T-cell (primary cell): ENCODE measurements at regions of chr2 and their contacts with region 1.

Region 1: DNA sequence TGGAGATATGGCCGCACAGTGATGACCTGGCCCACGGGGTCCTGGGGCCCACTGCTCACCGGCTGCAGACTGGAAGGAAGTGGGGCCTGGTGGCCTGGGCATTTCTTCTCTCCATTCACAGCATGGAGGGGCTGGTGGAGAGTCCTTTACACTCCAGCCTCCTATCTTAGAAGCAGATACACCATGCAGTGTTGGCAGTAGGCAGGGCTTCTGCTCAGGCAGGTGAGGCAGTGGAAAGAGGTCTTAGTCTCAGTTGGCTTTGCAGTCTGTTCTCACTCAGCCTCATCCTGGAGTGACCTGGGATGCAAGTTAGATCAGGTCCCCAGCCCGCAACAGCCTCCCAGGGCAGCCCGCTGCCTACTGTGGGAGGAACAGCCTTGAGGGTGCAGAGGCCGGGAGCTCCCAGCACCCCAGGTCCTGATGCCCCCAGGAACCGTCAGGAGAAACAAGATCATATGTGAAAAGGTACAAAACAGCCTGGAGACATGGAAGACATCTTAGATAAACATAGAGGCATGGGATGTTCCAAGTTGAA is 45.8 kb upstream of the OTOS start:
- DNase-seq: no peak
- ATAC-seq: no peak
- H3K4me3 ChIP-seq: no peak overlapping the region
- H3K4me3 Mint-ChIP-seq: no peak overlapping the region
- H3K27ac ChIP-seq: no peak overlapping the region
- H3K27ac Mint-ChIP-seq: no peak overlapping the region
- H3K4me1 ChIP-seq: no peaks in the 10 kb centered on the region
- H3K4me1 Mint-ChIP-seq: no peaks in the 10 kb centered on the region
- H3K27me3 ChIP-seq: peaks cover 0 to 37% of the 10 kb centered on the region in 2 experiments
- H3K27me3 Mint-ChIP-seq: peaks cover 10 to 29% of the 10 kb centered on the region in 2 donors

Region 2: DNA sequence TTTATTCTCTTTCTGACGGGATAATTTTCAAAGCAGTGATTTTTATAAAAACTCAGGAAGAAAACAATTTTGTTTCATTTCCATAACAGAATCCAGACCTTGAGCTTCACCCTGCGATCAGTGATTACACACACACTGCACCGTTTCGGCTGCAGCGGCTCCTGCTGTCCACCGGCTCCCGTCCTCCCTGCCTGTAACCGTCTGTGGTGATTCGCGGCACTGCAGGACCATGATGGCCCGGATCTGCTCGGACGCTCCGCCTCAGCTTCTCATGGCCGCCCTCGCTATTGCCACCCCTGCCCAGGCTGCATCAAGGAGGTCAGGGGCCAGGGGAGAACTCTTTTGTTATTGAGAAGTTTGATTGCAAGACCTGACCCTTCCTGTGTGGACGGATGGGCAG is 1092.3 kb before region 1 on chr2:
- CTCF ChIA-PET with region 1: interaction called in 1 of 2 experiments, 10 read pairs
- POLR2A ChIA-PET with region 1: no interaction called
- DNase-seq: no peak
- ATAC-seq: no peak
- H3K4me3 ChIP-seq: no peak overlapping the region
- H3K4me3 Mint-ChIP-seq: no peak overlapping the region
- H3K27ac ChIP-seq: no peak overlapping the region
- H3K27ac Mint-ChIP-seq: no peak overlapping the region
- H3K4me1 ChIP-seq: no peaks in the 10 kb centered on the region
- H3K4me1 Mint-ChIP-seq: no peaks in the 10 kb centered on the region
- H3K27me3 ChIP-seq: no peaks in the 10 kb centered on the region
- H3K27me3 Mint-ChIP-seq: no peaks in the 10 kb centered on the region

Region 3: GRCh38 chr2:240277073-240277806 is 91.0 kb after region 1 on chr2:
- CTCF ChIA-PET with region 1: no interaction called
- POLR2A ChIA-PET with region 1: no interaction called
- DNase-seq: peak in 1 of 35 experiments; percentile 4
- ATAC-seq: no peak
- H3K4me3 ChIP-seq: no peak overlapping the region
- H3K4me3 Mint-ChIP-seq: no peak overlapping the region
- H3K27ac ChIP-seq: no peak overlapping the region
- H3K27ac Mint-ChIP-seq: no peak overlapping the region
- H3K4me1 ChIP-seq: no peaks in the 10 kb centered on the region
- H3K4me1 Mint-ChIP-seq: no peaks in the 10 kb centered on the region
- H3K27me3 ChIP-seq: peaks cover 0 to 26% of the 10 kb centered on the region in 2 experiments
- H3K27me3 Mint-ChIP-seq: peaks cover 49 to 73% of the 10 kb centered on the region in 2 donors